Caco-2 (cell line): ENCODE measurements at regions of chr2 and their contacts with region 1.

Region 1: DNA sequence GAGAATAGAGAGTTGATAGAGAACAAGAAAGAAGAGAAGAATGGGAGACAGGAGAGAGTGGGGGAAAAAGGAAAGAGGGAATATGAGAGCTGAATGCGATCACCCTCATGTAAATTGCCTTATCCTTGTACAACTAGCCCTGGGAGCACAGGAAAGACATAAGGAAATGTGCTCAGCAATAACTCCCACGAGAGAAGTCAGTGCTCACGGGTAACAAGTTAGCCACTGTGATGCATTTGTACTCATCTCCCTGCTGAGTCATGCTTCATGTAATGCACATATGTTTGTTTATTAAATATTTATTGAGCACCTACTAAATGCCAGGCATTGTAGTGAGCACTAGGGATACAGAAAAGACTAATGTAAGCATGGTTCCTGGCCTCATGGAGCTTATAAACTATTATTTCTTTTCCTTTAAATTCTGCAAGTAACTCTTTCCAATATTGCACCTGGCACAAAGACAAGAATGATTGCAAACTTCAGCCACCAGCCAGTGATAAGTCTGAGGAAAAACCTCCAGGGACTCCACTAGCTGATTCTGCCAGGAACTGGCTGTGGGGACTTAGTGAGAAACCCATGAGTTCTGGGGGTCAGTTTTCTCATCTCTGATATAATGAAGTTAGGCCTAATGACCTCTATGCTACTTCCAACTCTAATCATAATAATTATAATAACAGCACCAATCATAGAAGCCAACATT is 124.1 kb downstream of the LNPK start:
- DNase-seq: no peak
- H3K4me3 ChIP-seq: no peak overlapping the region
- H3K4me3 Mint-ChIP-seq: no peak overlapping the region
- H3K27ac Mint-ChIP-seq: no peak overlapping the region
- H3K4me1 ChIP-seq: no peaks in the 10 kb centered on the region
- H3K4me1 Mint-ChIP-seq: no peaks in the 10 kb centered on the region
- H3K27me3 ChIP-seq: no peaks in the 10 kb centered on the region
- H3K27me3 Mint-ChIP-seq: peaks cover 12% of the 10 kb centered on the region
- CTCF ChIP-seq: no peak

Region 2: GRCh38 chr2:177799531-177799930 is 1921.5 kb after region 1 on chr2:
- CTCF ChIA-PET with region 1: interaction called, 11 read pairs
- POLR2A ChIA-PET with region 1: no interaction called
- intact Hi-C with region 1: no loop called
- DNase-seq: peak in 1 of 2 experiments; percentile 22
- H3K4me3 ChIP-seq: no peak overlapping the region
- H3K4me3 Mint-ChIP-seq: no peak overlapping the region
- H3K27ac Mint-ChIP-seq: no peak overlapping the region
- H3K4me1 ChIP-seq: no peaks in the 10 kb centered on the region
- H3K4me1 Mint-ChIP-seq: no peaks in the 10 kb centered on the region
- H3K27me3 ChIP-seq: no peaks in the 10 kb centered on the region; the same call in 1 of the 2 replicates
- H3K27me3 Mint-ChIP-seq: peaks cover 4% of the 10 kb centered on the region
- CTCF ChIP-seq: peak; percentile 30 to 62